ENCODE measurements at regions of chr15 and their contacts with region 1.

Region 1: DNA sequence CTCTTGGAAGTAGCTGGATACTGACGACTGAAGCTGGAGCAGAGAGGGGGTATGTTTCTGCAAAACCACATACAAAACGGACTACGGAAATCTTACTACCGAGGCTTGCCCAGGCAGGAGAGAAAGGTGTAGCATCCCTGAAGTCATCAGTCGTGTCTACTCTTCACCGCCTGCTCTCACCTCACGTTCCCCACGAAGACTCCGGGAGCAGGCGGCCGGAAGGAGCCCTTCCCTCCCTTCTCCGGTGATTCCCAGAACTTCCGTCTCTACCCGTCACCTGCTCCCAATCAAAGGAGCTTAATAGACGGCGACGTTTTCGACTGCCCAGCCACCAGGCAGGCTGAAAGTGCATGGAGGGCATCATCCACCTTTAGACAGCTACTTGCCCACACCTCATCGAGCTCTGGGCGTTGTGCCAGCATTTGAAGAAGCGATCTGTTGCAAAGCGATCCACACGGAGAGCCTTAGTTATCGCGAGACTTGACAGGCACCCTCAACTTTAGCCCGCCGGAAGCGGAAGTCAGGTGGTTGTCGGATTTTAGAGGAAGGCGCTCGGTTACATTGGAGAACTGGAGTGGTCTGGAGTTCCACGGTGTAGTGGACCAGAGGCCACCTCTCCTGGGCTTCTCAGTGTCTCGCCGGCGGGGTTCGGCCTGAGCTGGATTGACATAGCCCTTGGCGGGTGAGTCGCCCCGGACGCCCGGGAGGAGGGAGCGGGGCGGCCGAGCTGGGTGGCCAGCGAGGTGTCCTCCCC is at the start of gene RAMAC:
- DNase-seq: peak; percentile 87
- H3K4me3 Mint-ChIP-seq: peak within 1 kb of the TSS; percentile 86
- H3K27ac Mint-ChIP-seq: peak within 1 kb of the TSS; percentile 95
- H3K4me1 Mint-ChIP-seq: peaks cover 22% of the 10 kb centered on the region
- H3K27me3 Mint-ChIP-seq: no peaks in the 10 kb centered on the region
- total RNA-seq, gene RAMAC: 21.2 and 22.7 TPM in 2 replicates

Region 2: DNA sequence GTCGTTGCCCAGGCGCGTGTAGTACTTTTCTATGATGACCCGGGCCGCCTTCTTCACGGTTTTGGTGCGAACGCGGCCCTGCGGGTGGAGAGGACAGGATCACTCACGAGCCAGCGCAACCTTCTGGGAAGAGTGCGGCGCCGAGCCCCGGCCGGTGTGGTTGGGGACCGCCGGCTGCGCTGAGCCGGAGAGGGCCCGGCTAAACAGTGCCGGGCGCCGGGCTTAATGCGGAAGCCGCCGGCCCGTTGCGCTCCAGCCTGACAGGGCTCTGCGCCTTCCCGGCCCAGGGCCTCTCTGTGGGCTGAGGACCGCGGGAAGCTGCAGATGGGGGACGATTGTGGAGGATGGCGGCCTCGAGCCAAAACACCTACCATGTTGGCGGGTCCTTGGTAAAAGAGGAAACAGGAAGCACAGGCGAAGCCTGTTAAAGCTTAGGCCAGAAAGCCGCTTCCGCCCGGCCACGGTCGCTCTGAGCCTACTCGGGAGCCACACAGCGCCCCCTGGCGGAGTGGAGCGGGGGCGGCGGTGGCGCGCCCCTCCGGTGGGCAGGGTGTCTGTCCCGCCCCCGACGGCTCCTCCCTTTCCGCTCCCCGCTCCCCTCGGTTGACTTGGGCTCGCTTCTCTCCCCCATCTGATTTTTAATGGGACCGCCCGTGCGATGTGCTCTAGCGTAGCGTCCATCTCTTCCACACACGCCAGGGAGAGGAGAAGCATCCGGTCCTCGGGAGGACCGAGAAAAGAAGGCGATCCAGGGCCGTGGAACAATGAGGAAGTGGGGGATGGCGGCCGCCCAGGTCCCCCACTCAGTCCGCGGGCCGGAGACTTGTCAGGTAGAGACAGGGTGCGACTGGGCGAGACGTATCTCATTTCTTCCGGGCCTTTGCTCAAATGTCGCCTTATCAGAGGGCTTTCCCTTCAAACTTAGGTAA is 445.5 kb before region 1 on chr15 and contains the start of gene RPS17:
- intact Hi-C with region 1: loop called (anchors 10 kb)
- DNase-seq: peak; percentile 98
- H3K4me3 Mint-ChIP-seq: peak within 1 kb of the TSS; percentile 95
- H3K27ac Mint-ChIP-seq: peak within 1 kb of the TSS; percentile 88
- H3K4me1 Mint-ChIP-seq: peaks cover 21% of the 10 kb centered on the region
- H3K27me3 Mint-ChIP-seq: peaks cover 3% of the 10 kb centered on the region
- total RNA-seq, gene RPS17: 2,500 and 2,516 TPM in 2 replicates

Region 3: GRCh38 chr15:82832601-82833361 is 153.1 kb before region 1 on chr15:
- intact Hi-C with region 1: loop called (anchors 5 kb)
- DNase-seq: peak; percentile 30
- H3K4me3 Mint-ChIP-seq: peak overlapping the region; percentile 49
- H3K27ac Mint-ChIP-seq: peak overlapping the region; percentile 91
- H3K4me1 Mint-ChIP-seq: peaks cover 46% of the 10 kb centered on the region
- H3K27me3 Mint-ChIP-seq: no peaks in the 10 kb centered on the region

Region 4: GRCh38 chr15:82849556-82850512 is 136.0 kb before region 1 on chr15:
- intact Hi-C with region 1: loop called (anchors 5 kb)
- DNase-seq: peak; percentile 50
- H3K4me3 Mint-ChIP-seq: no peak overlapping the region
- H3K27ac Mint-ChIP-seq: no peak overlapping the region
- H3K4me1 Mint-ChIP-seq: peaks cover 10% of the 10 kb centered on the region
- H3K27me3 Mint-ChIP-seq: peaks cover 4% of the 10 kb centered on the region

Measured in activated T-helper 2 cell treated with anti-CD3 and anti-CD28 coated beads, Interferon-gamma antibody, Interleukin-2, Interleukin-4, amounts not matched to agents 10 μg/mL and 5 μg/mL and 100 μg/mL, durations not matched to agents 14 hours and 24 hours and 36 hours (primary cell).